Ovary (tissue), 10 donors: ENCODE measurements at regions of chr1 and their contacts with region 1.

Region 1: GRCh38 chr1:167553136-167554027 is at the start of gene CREG1:
- DNase-seq: peak; percentile 90 to 94 (median 93)
- H3K4me3 ChIP-seq: peak within 1 kb of the TSS; percentile 77
- H3K27ac ChIP-seq: peak within 1 kb of the TSS; percentile 34 to 89
- H3K4me1 ChIP-seq: peaks cover 11% of the 10 kb centered on the region
- H3K27me3 ChIP-seq: no peaks in the 10 kb centered on the region
- CTCF ChIP-seq: peak in 1 of 3 donors; percentile 24
- EP300 ChIP-seq: no peak
- POLR2A ChIP-seq: peak; percentile 90
- total RNA-seq, gene CREG1: 82.2 to 151 (median 96.8) TPM

Region 2: GRCh38 chr1:167220537-167221125 is 332.8 kb before region 1 on chr1 and contains the start of gene POU2F1:
- intact Hi-C with region 1: loop called in 1 of 4 experiments (anchors 5 kb)
- DNase-seq: peak; percentile 99 to 100 (median 99)
- H3K4me3 ChIP-seq: peak within 1 kb of the TSS; percentile 94
- H3K27ac ChIP-seq: peak within 1 kb of the TSS; percentile 88 to 97
- H3K4me1 ChIP-seq: peaks cover 1% of the 10 kb centered on the region
- H3K27me3 ChIP-seq: no peaks in the 10 kb centered on the region
- CTCF ChIP-seq: peak; percentile 35 to 64 (median 63)
- EP300 ChIP-seq: no peak
- POLR2A ChIP-seq: peak; percentile 49
- total RNA-seq, gene POU2F1: 11.4 to 24.6 (median 20.4) TPM

Region 3: GRCh38 chr1:167584581-167584980 is 31.2 kb after region 1 on chr1:
- intact Hi-C with region 1: no loop called
- DNase-seq: no peak
- H3K4me3 ChIP-seq: no peak overlapping the region
- H3K27ac ChIP-seq: no peak overlapping the region
- H3K4me1 ChIP-seq: no peaks in the 10 kb centered on the region
- H3K27me3 ChIP-seq: no peaks in the 10 kb centered on the region
- CTCF ChIP-seq: no peak
- EP300 ChIP-seq: no peak
- POLR2A ChIP-seq: no peak

Region 4: DNA sequence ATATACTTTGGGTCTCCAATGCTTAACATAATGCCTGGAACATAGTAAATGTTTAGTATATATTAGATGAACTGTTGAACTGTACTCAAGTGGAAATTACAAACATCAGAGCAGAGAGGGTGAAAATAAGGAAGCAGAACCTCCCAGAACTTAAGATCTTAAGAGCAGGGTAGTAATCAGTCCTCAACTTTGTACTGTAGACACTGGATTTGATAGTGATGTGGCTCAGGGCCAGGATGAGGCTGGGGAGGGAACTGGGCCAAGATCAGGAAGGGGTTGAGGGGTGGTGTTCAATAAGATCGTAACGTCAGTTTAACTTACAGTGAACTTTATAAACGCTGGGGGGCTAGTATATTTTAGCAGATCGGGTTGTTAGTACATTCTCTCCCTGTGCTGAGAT is 183.8 kb after region 1 on chr1:
- intact Hi-C with region 1: no loop called
- DNase-seq: no peak
- H3K4me3 ChIP-seq: no peak overlapping the region
- H3K27ac ChIP-seq: no peak overlapping the region
- H3K4me1 ChIP-seq: peaks cover 8% of the 10 kb centered on the region
- H3K27me3 ChIP-seq: no peaks in the 10 kb centered on the region
- CTCF ChIP-seq: no peak
- EP300 ChIP-seq: no peak
- POLR2A ChIP-seq: no peak

Region 5: GRCh38 chr1:167973832-167974231 is 420.4 kb after region 1 on chr1:
- intact Hi-C with region 1: no loop called
- DNase-seq: no peak
- H3K4me3 ChIP-seq: no peak overlapping the region
- H3K27ac ChIP-seq: no peak overlapping the region
- H3K4me1 ChIP-seq: no peaks in the 10 kb centered on the region
- H3K27me3 ChIP-seq: no peaks in the 10 kb centered on the region
- CTCF ChIP-seq: no peak
- EP300 ChIP-seq: no peak
- POLR2A ChIP-seq: no peak